ENCODE measurements at regions of chr10 and their contacts with region 1.

Region 1: DNA sequence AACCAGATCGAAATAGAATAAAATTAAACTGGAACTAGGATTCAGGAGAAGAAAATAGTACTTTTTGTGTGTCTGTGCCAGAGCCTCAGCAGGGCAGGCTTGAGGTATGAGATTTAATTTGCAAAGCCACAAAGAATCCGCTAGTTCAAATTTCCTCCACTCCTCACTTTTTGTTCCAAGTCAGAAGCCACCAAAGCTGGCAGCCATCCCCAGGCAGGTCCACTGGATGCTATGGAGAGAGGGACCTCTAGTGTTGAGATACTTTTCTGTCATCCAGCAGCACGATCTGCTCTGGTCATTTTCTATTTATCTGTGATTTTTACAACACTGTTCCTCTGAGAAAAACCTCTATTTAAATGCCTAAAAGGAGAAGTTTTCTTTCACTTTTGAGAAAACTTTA is 147.9 kb upstream of the FRMD4A start:
- DNase-seq: no peak
- ATAC-seq: no peak
- H3K4me3 ChIP-seq: no peak overlapping the region
- H3K27ac ChIP-seq: no peak overlapping the region
- H3K4me1 ChIP-seq: no peaks in the 10 kb centered on the region
- H3K27me3 ChIP-seq: no peaks in the 10 kb centered on the region
- CTCF ChIP-seq: peak; percentile 43

Region 2: GRCh38 chr10:14191871-14192270 is 286.7 kb before region 1 on chr10:
- CTCF ChIA-PET with region 1: no interaction called
- POLR2A ChIA-PET with region 1: no interaction called
- in situ Hi-C with region 1: no loop called
- intact Hi-C with region 1: loop called (anchors 10 kb)
- DNase-seq: no peak
- ATAC-seq: no peak
- H3K4me3 ChIP-seq: no peak overlapping the region
- H3K27ac ChIP-seq: no peak overlapping the region
- H3K4me1 ChIP-seq: no peaks in the 10 kb centered on the region
- H3K27me3 ChIP-seq: peaks cover 2% of the 10 kb centered on the region; the same call in 1 of the 2 replicates
- CTCF ChIP-seq: no peak